ENCODE measurements at regions of chr20 and their contacts with region 1.

Region 1: GRCh38 chr20:45971675-45972499 is at the start of gene ZNF335:
- DNase-seq: peak; percentile 99
- H3K4me3 ChIP-seq: peak within 1 kb of the TSS; percentile 74 to 89
- H3K27ac ChIP-seq: peak within 1 kb of the TSS; percentile 99 to 100
- H3K4me1 ChIP-seq: peaks cover 9 to 16% of the 10 kb centered on the region in 2 experiments; a peak in 2 of 4 replicates
- H3K27me3 ChIP-seq: no peaks in the 10 kb centered on the region
- CTCF ChIP-seq: peak; percentile 20
- EP300 ChIP-seq: peak in 1 of 2 experiments; percentile 44; a peak in 1 of 4 replicates
- RAD21 ChIP-seq: no peak
- polyA plus RNA-seq, gene ZNF335: 8.5 and 11.7 TPM in 2 replicates

Region 2: GRCh38 chr20:45670139-45670538 is 301.7 kb before region 1 on chr20 and contains the start of gene WFDC11:
- CTCF ChIA-PET with region 1: no interaction called
- POLR2A ChIA-PET with region 1: no interaction called
- DNase-seq: no peak
- H3K4me3 ChIP-seq: no peak within 1 kb of the TSS
- H3K27ac ChIP-seq: no peak within 1 kb of the TSS
- H3K4me1 ChIP-seq: no peaks in the 10 kb centered on the region
- H3K27me3 ChIP-seq: no peaks in the 10 kb centered on the region
- CTCF ChIP-seq: no peak
- EP300 ChIP-seq: no peak
- RAD21 ChIP-seq: no peak
- polyA plus RNA-seq, gene WFDC11: not detected in 2 replicates

Region 3: DNA sequence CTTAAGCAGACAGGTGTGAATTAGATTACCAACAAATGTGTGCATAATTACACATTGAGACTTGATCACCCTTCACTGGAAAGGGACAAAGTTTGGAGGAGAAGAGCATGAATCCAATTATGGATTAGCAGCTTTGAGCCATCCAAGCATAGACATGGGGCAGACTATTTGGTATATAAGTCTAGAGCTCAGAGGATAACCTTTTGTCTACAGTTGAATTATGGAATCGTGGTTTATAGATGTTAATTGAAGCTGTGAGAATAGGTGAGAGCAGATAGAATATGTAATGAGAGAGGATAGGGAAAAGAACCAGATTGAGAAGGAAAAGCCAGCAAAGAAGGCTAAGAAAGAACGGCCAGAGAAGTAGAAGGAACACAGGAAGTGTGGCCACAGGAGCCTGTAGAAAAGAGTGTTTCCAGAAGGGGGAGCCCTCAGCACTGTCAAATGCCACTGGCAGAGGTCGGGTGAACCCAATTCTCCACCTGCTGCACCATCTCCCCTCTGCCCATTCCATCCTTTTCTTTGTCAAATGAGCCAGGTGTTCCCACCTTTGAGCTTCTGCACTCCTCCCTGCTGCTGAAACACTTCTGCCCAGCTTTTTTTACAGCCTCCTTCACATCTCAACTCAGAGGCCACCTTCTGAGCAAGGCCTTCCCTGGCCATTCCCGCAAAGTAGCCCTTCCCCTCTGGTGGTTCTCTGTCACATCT is 172.8 kb before region 1 on chr20:
- CTCF ChIA-PET with region 1: interaction called, 11 read pairs
- POLR2A ChIA-PET with region 1: no interaction called
- DNase-seq: peak; percentile 71
- H3K4me3 ChIP-seq: no peak overlapping the region
- H3K27ac ChIP-seq: peak overlapping the region in 1 of 2 experiments; percentile 1; a peak in 1 of 4 replicates
- H3K4me1 ChIP-seq: no peaks in the 10 kb centered on the region
- H3K27me3 ChIP-seq: no peaks in the 10 kb centered on the region
- CTCF ChIP-seq: peak; percentile 76
- EP300 ChIP-seq: no peak
- RAD21 ChIP-seq: peak; percentile 76

Region 4: GRCh38 chr20:45934586-45935415 is 37.1 kb before region 1 on chr20 and contains the start of gene PCIF1:
- CTCF ChIA-PET with region 1: interaction called, 24 read pairs
- POLR2A ChIA-PET with region 1: interaction called, 18 read pairs
- DNase-seq: peak; percentile 98
- H3K4me3 ChIP-seq: peak within 1 kb of the TSS; percentile 85 to 89
- H3K27ac ChIP-seq: peak within 1 kb of the TSS; percentile 98
- H3K4me1 ChIP-seq: peaks cover 10 to 26% of the 10 kb centered on the region in 2 experiments; a peak in 3 of 4 replicates
- H3K27me3 ChIP-seq: no peaks in the 10 kb centered on the region
- CTCF ChIP-seq: no peak
- EP300 ChIP-seq: no peak
- RAD21 ChIP-seq: no peak
- polyA plus RNA-seq, gene PCIF1: 18.2 and 23.1 TPM in 2 replicates

Region 5: GRCh38 chr20:45946149-45946970 is 25.5 kb before region 1 on chr20:
- CTCF ChIA-PET with region 1: interaction called, 27 read pairs
- POLR2A ChIA-PET with region 1: no interaction called
- DNase-seq: no peak
- H3K4me3 ChIP-seq: no peak overlapping the region
- H3K27ac ChIP-seq: no peak overlapping the region
- H3K4me1 ChIP-seq: peaks cover 0 to 5% of the 10 kb centered on the region in 2 experiments; a peak in 1 of 4 replicates
- H3K27me3 ChIP-seq: no peaks in the 10 kb centered on the region
- CTCF ChIP-seq: no peak
- EP300 ChIP-seq: no peak
- RAD21 ChIP-seq: no peak

Region 6: GRCh38 chr20:45987108-45987780 is 15.4 kb after region 1 on chr20:
- CTCF ChIA-PET with region 1: interaction called, 60 read pairs
- POLR2A ChIA-PET with region 1: interaction called, 4 read pairs
- DNase-seq: peak; percentile 91
- H3K4me3 ChIP-seq: no peak overlapping the region; a peak in 1 of 4 replicates
- H3K27ac ChIP-seq: no peak overlapping the region
- H3K4me1 ChIP-seq: no peaks in the 10 kb centered on the region; a peak in 1 of 4 replicates
- H3K27me3 ChIP-seq: no peaks in the 10 kb centered on the region; the same call in 1 of the 2 replicates
- CTCF ChIP-seq: peak; percentile 90
- EP300 ChIP-seq: no peak
- RAD21 ChIP-seq: peak; percentile 79

Region 7: DNA sequence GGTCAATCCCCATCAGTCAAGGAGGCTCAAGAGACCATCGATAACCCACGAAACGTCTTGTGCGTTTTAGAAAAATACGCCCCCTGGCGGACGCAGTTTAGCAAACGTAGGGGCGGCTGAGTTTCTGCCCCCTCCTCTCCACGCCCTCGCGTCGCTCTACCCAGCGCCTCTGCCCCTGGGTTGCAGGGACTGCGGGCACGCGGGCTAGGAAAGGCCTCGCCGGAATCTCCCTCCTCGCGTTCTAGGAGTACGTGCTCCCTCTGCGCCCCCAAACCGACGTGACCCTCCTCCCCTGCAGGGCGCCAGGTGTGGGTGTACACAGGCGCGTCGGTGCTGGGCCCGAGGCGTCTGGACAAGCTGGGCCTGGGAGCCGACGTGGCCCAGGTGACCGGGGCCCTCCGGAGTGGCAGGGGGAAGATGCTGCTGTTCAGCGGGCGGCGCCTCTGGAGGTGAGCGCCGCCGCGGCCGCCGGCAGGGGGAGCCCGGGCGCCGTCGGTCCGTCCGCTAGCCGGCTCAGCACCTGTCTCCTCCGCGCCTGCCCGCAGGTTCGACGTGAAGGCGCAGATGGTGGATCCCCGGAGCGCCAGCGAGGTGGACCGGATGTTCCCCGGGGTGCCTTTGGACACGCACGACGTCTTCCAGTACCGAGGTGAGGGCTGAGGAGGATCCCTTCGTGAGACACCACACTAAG is 42.1 kb after region 1 on chr20:
- CTCF ChIA-PET with region 1: interaction called, 17 read pairs
- POLR2A ChIA-PET with region 1: no interaction called
- DNase-seq: peak; percentile 84
- H3K4me3 ChIP-seq: peak overlapping the region in 1 of 2 experiments; percentile 41; a peak in 2 of 4 replicates
- H3K27ac ChIP-seq: no peak overlapping the region
- H3K4me1 ChIP-seq: peaks cover 0 to 6% of the 10 kb centered on the region in 2 experiments; a peak in 1 of 4 replicates
- H3K27me3 ChIP-seq: no peaks in the 10 kb centered on the region
- CTCF ChIP-seq: peak; percentile 67
- EP300 ChIP-seq: no peak
- RAD21 ChIP-seq: peak; percentile 57